Right ventricle myocardium inferior (tissue), 1 donor: ENCODE measurements at regions of chr3 and their contacts with region 1.

Region 1: DNA sequence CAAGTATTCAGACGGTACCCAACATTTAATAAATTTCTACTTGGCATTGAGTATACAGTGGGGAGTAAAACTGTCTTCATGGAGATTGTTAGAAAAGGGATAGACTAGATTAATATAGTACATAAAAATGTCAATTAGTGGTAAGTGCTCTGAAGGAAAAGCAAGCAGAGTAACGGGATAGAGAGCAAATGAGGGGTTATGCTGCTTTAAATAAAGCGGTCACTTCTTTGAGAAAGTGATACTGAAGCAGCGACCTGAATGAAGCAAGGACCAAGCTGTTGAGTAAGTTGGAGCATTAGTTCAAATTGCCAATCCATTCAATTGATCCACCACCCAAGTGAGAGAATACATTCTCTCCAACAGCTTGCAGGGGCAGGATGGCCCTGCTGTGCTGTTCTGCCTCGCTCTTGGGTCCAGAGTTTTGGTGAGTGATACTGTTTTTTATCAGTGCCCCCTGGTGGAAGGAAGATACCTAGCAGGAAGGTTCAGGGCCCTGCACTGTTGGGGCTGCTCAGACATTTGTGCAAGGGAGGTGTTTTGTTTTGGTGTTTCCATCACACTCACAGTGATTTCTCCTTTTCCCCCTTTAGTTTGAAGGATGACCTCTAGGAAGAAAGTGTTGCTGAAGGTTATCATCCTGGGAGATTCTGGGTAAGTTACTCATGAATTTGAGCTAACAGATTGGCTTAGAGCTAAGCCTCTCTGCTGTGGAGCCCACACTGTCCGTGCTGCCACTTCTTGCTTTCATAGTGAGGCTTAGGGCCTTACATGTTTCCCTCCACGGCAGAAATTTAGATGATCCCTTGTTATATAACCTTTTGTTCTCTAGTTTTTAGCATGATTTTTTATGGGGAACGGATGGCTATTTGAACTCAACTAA is 69.0 kb downstream of the RAB7A start:
- DNase-seq: no peak
- ATAC-seq: peak; percentile 89

Region 2: DNA sequence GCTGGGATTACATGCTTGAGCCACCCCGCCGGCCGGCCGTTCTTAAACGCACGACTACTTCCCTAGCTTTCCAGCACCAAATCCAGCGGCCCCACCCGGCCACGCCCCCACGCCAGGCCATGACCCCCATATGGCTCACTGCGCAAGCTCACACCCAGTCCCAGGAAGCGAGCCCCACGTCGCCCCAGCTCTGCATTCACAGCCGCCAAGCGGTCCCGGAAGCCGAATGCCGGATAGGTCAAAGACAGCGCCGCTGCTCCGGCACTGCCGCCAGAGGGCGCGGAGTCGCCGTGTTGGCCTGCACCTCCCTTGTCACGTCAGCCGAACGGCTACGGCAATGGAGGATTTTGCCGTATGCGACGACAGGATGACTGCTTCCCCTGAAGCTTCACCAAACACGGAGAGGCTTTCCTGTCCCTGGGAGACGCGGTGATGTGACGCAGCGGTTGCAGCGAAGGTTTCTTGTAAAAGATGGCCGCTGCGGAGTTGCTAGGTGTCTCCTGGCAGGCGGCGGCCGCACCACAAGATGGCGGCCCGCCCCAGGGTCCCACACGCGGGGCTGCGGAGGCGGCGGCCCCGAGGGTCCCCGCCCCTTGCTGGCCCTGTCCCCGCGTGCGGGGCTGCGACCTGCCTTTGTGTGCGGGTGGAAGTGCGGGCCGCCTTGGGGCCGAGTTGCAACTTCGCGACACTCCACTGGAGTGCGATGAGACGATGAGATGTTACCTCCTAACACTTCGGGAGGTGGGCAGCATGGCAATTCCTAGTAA is 114.2 kb before region 1 on chr3:
- intact Hi-C with region 1: loop called (anchors 1 kb)
- DNase-seq: peak; percentile 100
- ATAC-seq: peak; percentile 100